Activated CD8-positive, alpha-beta T cell treated with anti-CD3 and anti-CD28 coated beads, Interleukin-2, amount 10 ng/mL, durations not matched to agents 7 days and 5 days (primary cell): ENCODE measurements at regions of chr17 and their contacts with region 1.

Region 1: GRCh38 chr17:80426681-80427326 is 11.8 kb downstream of the ENDOV start:
- DNase-seq: peak; percentile 89
- ATAC-seq: peak; percentile 98
- H3K4me3 Mint-ChIP-seq: no peak overlapping the region
- H3K27ac Mint-ChIP-seq: no peak overlapping the region
- H3K4me1 Mint-ChIP-seq: peaks cover 27% of the 10 kb centered on the region
- H3K27me3 Mint-ChIP-seq: no peaks in the 10 kb centered on the region

Region 2: DNA sequence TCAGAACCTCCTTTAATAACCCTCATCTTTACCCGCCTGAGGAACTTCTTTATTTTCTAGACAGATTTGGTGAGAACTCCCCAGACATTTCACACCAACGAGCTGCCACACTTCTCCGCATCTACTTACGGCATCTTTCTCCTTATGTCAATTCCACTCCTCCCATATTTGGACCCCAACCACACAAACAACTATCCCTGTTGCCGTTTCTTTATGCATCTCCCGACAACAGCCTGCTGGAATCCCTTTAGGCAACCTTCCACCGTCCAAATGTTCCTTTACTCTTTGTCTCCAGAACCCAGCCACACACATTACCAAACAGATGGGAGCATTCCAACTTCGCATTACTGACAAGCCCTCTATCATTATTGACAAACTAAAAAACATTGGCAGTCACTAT is 20.7 kb before region 1 on chr17:
- CTCF ChIA-PET with region 1: no interaction called
- POLR2A ChIA-PET with region 1: no interaction called
- DNase-seq: no peak
- ATAC-seq: no peak
- H3K4me3 Mint-ChIP-seq: no peak overlapping the region
- H3K27ac Mint-ChIP-seq: no peak overlapping the region
- H3K4me1 Mint-ChIP-seq: no peaks in the 10 kb centered on the region
- H3K27me3 Mint-ChIP-seq: peaks cover 4% of the 10 kb centered on the region

Region 3: DNA sequence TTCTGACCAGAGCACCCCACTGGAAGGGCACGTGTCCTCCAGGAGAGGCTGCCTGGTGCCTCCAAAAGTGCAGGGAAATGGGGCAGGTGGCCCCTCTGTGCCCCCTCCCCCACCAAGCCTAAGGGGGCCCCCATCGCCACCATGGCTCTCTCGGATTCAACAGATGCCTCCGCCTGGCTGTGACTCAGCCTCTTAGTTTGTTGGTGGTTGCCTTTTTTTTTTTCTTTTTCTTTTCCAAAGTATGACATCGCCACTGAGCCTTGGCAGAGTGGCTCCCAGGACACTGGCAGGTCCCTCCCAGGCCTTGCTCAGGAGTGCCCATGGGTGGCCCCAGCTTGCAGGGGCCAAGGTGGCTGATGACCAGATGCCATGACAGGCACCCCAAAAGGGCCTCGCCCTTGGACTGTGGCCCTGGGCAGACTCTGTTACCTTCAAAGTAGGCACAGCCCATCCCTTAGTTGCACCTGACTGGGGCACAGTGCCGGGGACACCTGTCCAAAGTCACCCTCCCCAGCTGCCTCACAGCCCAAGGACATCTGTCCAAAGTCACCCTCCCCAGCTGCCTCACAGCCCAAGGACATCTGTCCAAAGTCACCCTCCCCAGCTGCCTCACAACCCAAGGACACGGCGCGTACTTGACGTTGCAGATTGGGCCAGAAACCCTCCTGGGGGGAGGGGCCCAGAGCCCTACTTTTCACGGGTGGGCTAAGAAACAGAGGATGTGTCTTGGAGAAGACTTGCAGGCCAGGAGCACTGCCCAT is 20.0 kb after region 1 on chr17:
- CTCF ChIA-PET with region 1: no interaction called
- POLR2A ChIA-PET with region 1: no interaction called
- DNase-seq: no peak
- ATAC-seq: no peak
- H3K4me3 Mint-ChIP-seq: no peak overlapping the region
- H3K27ac Mint-ChIP-seq: no peak overlapping the region
- H3K4me1 Mint-ChIP-seq: peaks cover 2% of the 10 kb centered on the region
- H3K27me3 Mint-ChIP-seq: peaks cover 3% of the 10 kb centered on the region

Region 4: GRCh38 chr17:80970044-80970761 is 543.4 kb after region 1 on chr17:
- CTCF ChIA-PET with region 1: interaction called, 18 read pairs
- POLR2A ChIA-PET with region 1: no interaction called
- DNase-seq: peak; percentile 74
- ATAC-seq: peak; percentile 79
- H3K4me3 Mint-ChIP-seq: peak overlapping the region; percentile 5
- H3K27ac Mint-ChIP-seq: peak overlapping the region; percentile 79
- H3K4me1 Mint-ChIP-seq: peaks cover 8% of the 10 kb centered on the region
- H3K27me3 Mint-ChIP-seq: peaks cover 2% of the 10 kb centered on the region